ENCODE measurements at regions of chr2 and their contacts with region 1.

Region 1: DNA sequence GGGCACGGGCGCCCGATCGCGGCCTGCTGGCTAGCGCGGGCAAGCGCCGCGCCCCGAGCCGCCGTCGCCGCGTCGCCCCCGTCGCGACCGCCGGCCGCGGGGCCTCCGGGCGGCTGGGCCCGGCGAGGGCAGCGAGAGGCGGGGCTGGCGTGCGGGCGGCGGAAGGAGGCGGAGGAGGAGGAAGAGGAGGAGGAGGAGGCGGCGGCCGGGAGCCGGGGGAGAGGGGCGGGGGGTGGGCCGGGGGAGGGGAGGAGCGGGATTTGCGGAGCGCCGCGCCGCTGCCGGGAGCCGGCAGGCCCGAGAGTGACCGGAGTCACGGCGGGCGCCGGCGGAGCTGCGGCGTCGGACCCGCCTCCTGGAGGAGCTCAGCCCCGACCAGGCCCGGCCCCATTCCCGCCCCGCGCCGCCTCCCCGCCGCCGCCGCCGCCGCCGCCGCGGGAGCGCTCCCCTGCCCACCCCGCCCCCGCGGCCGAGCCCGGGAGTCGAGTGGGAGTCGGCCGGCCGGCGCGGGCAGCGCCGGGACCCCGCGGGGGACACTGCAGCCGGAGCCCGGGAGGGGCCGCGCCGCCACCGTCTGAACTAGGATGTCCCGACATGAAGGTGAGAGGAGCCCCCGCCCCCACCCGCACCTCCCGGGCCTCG is at the start of gene KCMF1:
- DNase-seq: peak; percentile 44 to 82 (median 63)
- ATAC-seq: peak; percentile 49
- H3K4me3 ChIP-seq: peak within 1 kb of the TSS; percentile 99
- H3K4me3 Mint-ChIP-seq: peak within 1 kb of the TSS; percentile 99
- H3K27ac ChIP-seq: peak within 1 kb of the TSS; percentile 84 to 91
- H3K27ac Mint-ChIP-seq: peak within 1 kb of the TSS; percentile 98
- H3K4me1 ChIP-seq: peaks cover 28% of the 10 kb centered on the region
- H3K4me1 Mint-ChIP-seq: peaks cover 61% of the 10 kb centered on the region
- H3K27me3 ChIP-seq: no peaks in the 10 kb centered on the region
- H3K27me3 Mint-ChIP-seq: no peaks in the 10 kb centered on the region
- CTCF ChIP-seq: no peak
- total RNA-seq, gene KCMF1: 72.4 to 78.0 TPM

Region 2: DNA sequence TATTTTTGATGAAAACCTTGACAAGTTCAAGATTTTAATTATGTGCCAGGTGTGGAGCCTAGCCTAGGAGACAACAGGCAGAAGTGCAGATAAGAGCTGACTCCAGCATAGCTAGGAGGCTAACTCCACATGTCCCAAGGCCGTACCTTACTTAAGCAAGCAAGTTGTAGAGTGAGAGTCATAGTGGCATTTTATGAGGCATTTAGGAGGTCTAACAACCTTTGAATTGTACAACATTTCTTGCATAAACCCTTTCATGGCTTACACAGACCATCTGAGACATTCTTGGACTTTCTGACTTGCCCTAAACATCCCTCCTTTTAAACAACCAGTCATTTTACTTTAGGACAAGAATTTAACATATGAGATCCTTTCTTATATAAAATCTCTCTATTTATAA is 503.6 kb before region 1 on chr2:
- CTCF ChIA-PET with region 1: no interaction called
- POLR2A ChIA-PET with region 1: no interaction called
- intact Hi-C with region 1: no loop called
- DNase-seq: no peak
- ATAC-seq: no peak
- H3K4me3 ChIP-seq: no peak overlapping the region
- H3K4me3 Mint-ChIP-seq: no peak overlapping the region
- H3K27ac ChIP-seq: no peak overlapping the region
- H3K27ac Mint-ChIP-seq: no peak overlapping the region
- H3K4me1 ChIP-seq: no peaks in the 10 kb centered on the region
- H3K4me1 Mint-ChIP-seq: no peaks in the 10 kb centered on the region
- H3K27me3 ChIP-seq: no peaks in the 10 kb centered on the region
- H3K27me3 Mint-ChIP-seq: no peaks in the 10 kb centered on the region
- CTCF ChIP-seq: no peak

Region 3: GRCh38 chr2:84931384-84931821 is 39.6 kb before region 1 on chr2:
- CTCF ChIA-PET with region 1: interaction called, 15 read pairs
- POLR2A ChIA-PET with region 1: interaction called, 29 read pairs
- intact Hi-C with region 1: loop called (anchors 5 kb)
- DNase-seq: no peak
- ATAC-seq: no peak
- H3K4me3 ChIP-seq: no peak overlapping the region
- H3K4me3 Mint-ChIP-seq: no peak overlapping the region
- H3K27ac ChIP-seq: no peak overlapping the region
- H3K27ac Mint-ChIP-seq: no peak overlapping the region
- H3K4me1 ChIP-seq: peaks cover 32% of the 10 kb centered on the region
- H3K4me1 Mint-ChIP-seq: peaks cover 31% of the 10 kb centered on the region
- H3K27me3 ChIP-seq: no peaks in the 10 kb centered on the region
- H3K27me3 Mint-ChIP-seq: no peaks in the 10 kb centered on the region
- CTCF ChIP-seq: no peak

Region 4: GRCh38 chr2:84946204-84947009 is 24.6 kb before region 1 on chr2:
- CTCF ChIA-PET with region 1: interaction called, 4 read pairs
- POLR2A ChIA-PET with region 1: interaction called, 45 read pairs
- intact Hi-C with region 1: loop called in 1 of 2 experiments (anchors 2 kb)
- DNase-seq: peak in 12 of 14 experiments; percentile 15 to 80 (median 50)
- ATAC-seq: peak; percentile 83
- H3K4me3 ChIP-seq: peak overlapping the region; percentile 25
- H3K4me3 Mint-ChIP-seq: peak overlapping the region; percentile 30
- H3K27ac ChIP-seq: peak overlapping the region; percentile 43 to 53
- H3K27ac Mint-ChIP-seq: peak overlapping the region; percentile 81
- H3K4me1 ChIP-seq: peaks cover 23% of the 10 kb centered on the region
- H3K4me1 Mint-ChIP-seq: peaks cover 31% of the 10 kb centered on the region
- H3K27me3 ChIP-seq: no peaks in the 10 kb centered on the region
- H3K27me3 Mint-ChIP-seq: no peaks in the 10 kb centered on the region
- CTCF ChIP-seq: no peak

Region 5: GRCh38 chr2:85011747-85012146 is 40.8 kb after region 1 on chr2:
- CTCF ChIA-PET with region 1: interaction called, 5 read pairs
- POLR2A ChIA-PET with region 1: interaction called, 3 read pairs
- intact Hi-C with region 1: loop called (anchors 2 to 5 kb)
- DNase-seq: peak in 1 of 14 experiments; percentile 27
- ATAC-seq: no peak
- H3K4me3 ChIP-seq: no peak overlapping the region
- H3K4me3 Mint-ChIP-seq: no peak overlapping the region
- H3K27ac ChIP-seq: no peak overlapping the region
- H3K27ac Mint-ChIP-seq: peak overlapping the region; percentile 22
- H3K4me1 ChIP-seq: peaks cover 28% of the 10 kb centered on the region
- H3K4me1 Mint-ChIP-seq: peaks cover 88% of the 10 kb centered on the region
- H3K27me3 ChIP-seq: no peaks in the 10 kb centered on the region
- H3K27me3 Mint-ChIP-seq: no peaks in the 10 kb centered on the region
- CTCF ChIP-seq: no peak

Region 6: DNA sequence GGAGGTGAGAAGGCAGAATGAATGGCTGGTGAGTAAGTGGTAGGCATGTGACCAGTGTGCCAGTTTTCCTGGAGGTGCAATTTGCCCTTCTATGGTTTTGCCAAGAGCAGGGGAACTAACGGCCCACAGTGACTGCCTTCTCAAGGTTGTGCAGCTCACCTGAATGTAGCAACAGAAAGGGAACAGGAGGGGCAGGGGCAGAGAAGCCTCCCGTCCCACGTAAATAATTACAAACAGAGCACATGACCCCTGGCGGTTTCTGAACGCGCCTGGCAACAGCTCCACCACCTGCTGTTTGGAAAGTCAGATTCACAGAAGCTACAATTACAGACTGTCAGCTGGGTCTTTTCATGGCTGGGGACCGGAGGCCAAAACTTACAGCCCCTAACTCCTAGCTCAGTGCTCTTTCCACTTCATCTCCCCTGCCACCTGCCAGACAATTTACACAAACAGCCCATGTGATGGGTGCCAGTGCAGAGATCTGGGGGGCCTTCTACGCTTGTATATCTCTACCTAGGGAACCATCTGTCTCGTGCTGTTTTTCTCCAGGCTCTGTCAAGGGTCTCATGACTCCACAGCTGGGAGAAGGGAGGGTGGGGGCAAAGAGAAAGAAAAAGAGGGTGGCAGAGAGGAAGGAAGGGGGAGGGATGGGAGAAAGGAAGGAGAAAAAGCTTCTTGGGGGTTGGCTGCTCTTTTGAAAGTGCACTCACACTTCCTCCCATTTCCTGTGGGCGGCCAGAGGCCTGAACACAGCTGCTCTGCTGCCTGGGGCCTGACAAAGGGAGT is 1065.1 kb after region 1 on chr2:
- CTCF ChIA-PET with region 1: no interaction called
- POLR2A ChIA-PET with region 1: no interaction called
- intact Hi-C with region 1: no loop called
- DNase-seq: peak; percentile 47 to 91 (median 68)
- ATAC-seq: peak; percentile 53
- H3K4me3 ChIP-seq: peak overlapping the region; percentile 29
- H3K4me3 Mint-ChIP-seq: peak overlapping the region; percentile 78
- H3K27ac ChIP-seq: peak overlapping the region; percentile 88 to 92
- H3K27ac Mint-ChIP-seq: peak overlapping the region; percentile 97
- H3K4me1 ChIP-seq: peaks cover 92% of the 10 kb centered on the region
- H3K4me1 Mint-ChIP-seq: peaks cover 72% of the 10 kb centered on the region
- H3K27me3 ChIP-seq: no peaks in the 10 kb centered on the region
- H3K27me3 Mint-ChIP-seq: peaks cover 3% of the 10 kb centered on the region
- CTCF ChIP-seq: peak; percentile 46